Endothelial cell of umbilical vein (primary cell): ENCODE measurements at regions of chr10 and their contacts with region 1.

Region 1: GRCh38 chr10:5623081-5623748 is 43.2 kb downstream of the ASB13 start:
- DNase-seq: peak; percentile 75
- H3K4me3 ChIP-seq: no peak overlapping the region
- H3K27ac ChIP-seq: no peak overlapping the region
- H3K4me1 ChIP-seq: no peaks in the 10 kb centered on the region
- H3K27me3 ChIP-seq: no peaks in the 10 kb centered on the region
- CTCF ChIP-seq: peak; percentile 89 to 94
- POLR2A ChIP-seq: no peak

Region 2: DNA sequence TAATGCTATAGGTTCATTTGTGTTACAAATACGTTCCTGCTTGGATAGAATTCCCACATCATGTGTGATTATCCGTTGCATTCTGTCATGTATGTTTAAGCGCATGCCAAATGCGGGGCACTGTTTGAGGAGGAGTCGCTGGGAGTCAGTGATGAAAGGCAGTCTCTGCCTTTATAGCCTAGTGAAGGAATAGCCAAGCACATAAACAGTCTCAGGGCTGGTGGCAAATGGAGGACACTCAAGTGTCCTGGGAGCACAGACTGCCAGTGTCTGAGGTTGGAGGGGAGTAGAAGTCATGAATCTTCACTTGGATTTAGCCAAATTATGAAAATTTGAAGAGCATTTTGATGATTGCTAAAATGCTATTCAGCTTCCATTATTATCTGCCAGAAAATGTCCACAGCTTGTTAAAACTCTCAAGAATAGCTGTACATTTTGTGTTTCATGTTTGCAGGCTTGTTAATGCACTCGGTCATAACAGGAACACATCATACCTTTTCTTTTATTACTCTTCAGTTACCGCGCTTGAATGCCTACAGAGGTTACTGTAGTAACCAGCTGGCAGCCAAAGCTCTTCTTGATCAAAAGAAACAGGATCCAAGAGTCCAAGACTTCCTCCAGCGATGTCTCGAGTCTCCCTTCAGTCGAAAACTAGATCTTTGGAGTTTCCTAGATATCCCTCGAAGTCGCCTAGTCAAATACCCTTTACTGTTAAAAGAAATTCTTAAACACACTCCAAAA is 169.3 kb before region 1 on chr10:
- CTCF ChIA-PET with region 1: interaction called, 309 read pairs
- POLR2A ChIA-PET with region 1: no interaction called
- dilution Hi-C with region 1: no loop called
- intact Hi-C with region 1: no loop called
- DNase-seq: no peak
- H3K4me3 ChIP-seq: no peak overlapping the region
- H3K27ac ChIP-seq: no peak overlapping the region
- H3K4me1 ChIP-seq: peaks cover 22% of the 10 kb centered on the region
- H3K27me3 ChIP-seq: no peaks in the 10 kb centered on the region
- CTCF ChIP-seq: no peak
- POLR2A ChIP-seq: no peak

Region 3: GRCh38 chr10:5548527-5549223 is 74.5 kb before region 1 on chr10:
- CTCF ChIA-PET with region 1: interaction called, 49 read pairs
- POLR2A ChIA-PET with region 1: interaction called, 3 read pairs
- dilution Hi-C with region 1: no loop called
- intact Hi-C with region 1: loop called (anchors 1 kb)
- DNase-seq: peak; percentile 89
- H3K4me3 ChIP-seq: no peak overlapping the region
- H3K27ac ChIP-seq: peak overlapping the region; percentile 93
- H3K4me1 ChIP-seq: peaks cover 48% of the 10 kb centered on the region
- H3K27me3 ChIP-seq: no peaks in the 10 kb centered on the region
- CTCF ChIP-seq: no peak
- POLR2A ChIP-seq: peak; percentile 5

Region 4: DNA sequence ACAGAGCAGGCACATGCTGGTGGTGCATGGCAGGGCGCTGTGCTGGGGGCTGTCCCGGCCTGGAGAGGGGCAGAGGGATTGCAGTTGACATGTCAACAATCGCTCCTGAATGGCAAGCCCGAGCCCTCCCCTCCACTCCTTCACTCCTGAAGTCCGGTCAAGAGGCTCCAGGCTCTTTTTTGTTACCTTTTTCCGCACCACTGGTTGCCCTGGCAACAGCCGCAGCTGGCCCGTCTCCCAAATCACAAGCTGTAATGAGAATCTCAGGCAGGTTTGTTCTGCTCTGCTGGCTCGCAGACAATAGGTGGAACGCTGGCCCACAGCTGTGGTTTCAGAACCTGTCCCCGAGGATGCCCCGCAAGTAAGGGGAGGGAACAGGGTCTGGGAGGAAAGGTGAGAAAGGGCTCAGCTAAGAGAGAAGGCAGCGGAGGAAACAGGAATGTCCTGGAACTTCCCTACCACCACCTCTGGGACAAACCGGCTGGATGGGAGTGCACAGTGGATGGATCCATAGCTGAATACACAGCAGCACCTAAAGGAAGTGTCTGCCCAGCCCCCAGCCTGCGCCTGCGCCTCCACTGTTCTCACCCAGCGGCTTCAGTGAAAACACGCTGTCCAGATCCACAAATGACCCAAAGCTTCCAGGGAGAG is 39.6 kb before region 1 on chr10:
- CTCF ChIA-PET with region 1: interaction called, 10 read pairs
- POLR2A ChIA-PET with region 1: no interaction called
- dilution Hi-C with region 1: no loop called
- intact Hi-C with region 1: no loop called
- DNase-seq: no peak
- H3K4me3 ChIP-seq: no peak overlapping the region
- H3K27ac ChIP-seq: no peak overlapping the region
- H3K4me1 ChIP-seq: peaks cover 4% of the 10 kb centered on the region
- H3K27me3 ChIP-seq: no peaks in the 10 kb centered on the region
- CTCF ChIP-seq: no peak
- POLR2A ChIP-seq: no peak